ENCODE measurements at regions of chr2 and their contacts with region 1.

Region 1: DNA sequence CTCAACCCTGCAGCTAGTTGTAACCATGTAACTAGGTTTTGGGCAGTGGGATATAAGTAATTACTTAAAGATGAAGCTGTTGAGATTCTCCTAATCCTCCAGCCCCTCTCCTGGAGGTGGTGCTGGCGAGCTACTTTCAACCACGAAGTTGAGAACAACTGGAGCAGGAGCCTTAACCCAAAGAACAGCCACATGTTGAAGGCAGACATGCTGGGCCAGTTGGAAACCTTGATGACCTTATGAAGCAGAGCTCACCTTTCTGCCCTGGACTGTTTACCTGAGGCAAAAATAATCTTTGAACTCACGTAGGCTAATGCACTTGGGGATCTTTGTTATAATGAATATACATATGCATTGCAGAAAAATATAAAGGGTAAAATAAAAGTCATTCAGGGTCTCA is 89.6 kb upstream of the NPAS2 start:
- DNase-seq: peak; percentile 74
- H3K4me3 ChIP-seq: no peak overlapping the region
- H3K27ac ChIP-seq: no peak overlapping the region
- H3K4me1 ChIP-seq: peaks cover 26% of the 10 kb centered on the region
- H3K27me3 ChIP-seq: no peaks in the 10 kb centered on the region
- CTCF ChIP-seq: peak; percentile 76 to 90

Region 2: DNA sequence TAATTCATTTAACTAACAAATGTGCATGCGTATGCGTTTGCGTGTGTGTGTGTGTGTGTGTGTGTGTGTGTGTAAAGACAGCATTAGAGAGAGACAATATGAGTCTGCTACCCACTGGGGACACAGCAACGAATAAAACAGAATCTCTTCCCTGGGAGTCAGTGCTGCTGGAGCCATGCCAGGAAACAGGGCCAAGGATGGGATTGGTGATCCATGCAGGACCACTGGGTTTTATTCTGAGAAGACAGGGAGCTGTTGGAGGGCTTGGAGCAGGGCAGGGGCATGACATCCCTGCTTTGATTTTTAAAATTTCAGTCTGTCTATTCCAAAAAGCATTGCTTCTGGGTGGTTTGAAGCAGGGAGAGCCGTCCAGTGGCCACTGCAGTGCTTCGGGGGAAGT is 104.6 kb before region 1 on chr2:
- CTCF ChIA-PET with region 1: no interaction called
- dilution Hi-C with region 1: no loop called
- in situ Hi-C with region 1: no loop called
- intact Hi-C with region 1: no loop called
- DNase-seq: no peak
- H3K4me3 ChIP-seq: no peak overlapping the region
- H3K27ac ChIP-seq: no peak overlapping the region
- H3K4me1 ChIP-seq: no peaks in the 10 kb centered on the region
- H3K27me3 ChIP-seq: peaks cover 11% of the 10 kb centered on the region
- CTCF ChIP-seq: no peak

Region 3: DNA sequence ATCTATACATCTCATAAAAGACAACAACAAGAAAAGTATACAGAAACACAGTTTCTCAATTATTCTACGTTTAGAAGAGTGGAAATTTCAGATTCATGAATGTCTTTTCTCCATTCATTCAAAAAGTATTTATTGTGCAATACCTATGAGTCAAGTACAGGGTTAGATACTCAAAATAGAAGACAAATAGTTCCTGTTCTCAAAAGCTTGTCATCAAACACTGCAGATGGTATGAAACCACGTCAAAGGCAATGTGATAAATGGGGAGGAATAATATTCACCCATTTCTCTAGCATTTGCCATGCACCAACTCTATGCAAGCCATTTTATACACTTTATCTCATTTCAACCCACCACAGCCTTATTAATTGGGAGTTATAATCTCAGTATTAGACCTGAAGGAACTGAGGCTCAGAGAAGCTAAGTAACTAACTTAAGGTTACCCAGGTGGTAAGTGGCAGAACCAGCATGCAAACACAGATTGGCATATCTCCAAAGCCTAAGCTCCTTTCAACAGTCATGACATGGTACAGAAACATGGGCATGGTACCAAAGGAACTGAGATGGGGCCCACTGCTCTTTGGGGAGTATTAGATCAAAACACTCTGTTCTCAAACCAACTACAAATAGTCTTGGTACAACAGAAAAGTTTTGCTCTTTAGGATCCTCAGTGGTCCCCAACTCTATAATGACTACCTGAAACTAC is 22.4 kb after region 1 on chr2:
- CTCF ChIA-PET with region 1: no interaction called
- dilution Hi-C with region 1: no loop called
- in situ Hi-C with region 1: no loop called
- intact Hi-C with region 1: loop called (anchors 1 kb)
- DNase-seq: peak; percentile 92
- H3K4me3 ChIP-seq: peak overlapping the region in 1 of 3 experiments; percentile 5
- H3K27ac ChIP-seq: peak overlapping the region; percentile 100
- H3K4me1 ChIP-seq: peaks cover 72% of the 10 kb centered on the region
- H3K27me3 ChIP-seq: no peaks in the 10 kb centered on the region
- CTCF ChIP-seq: no peak

Region 4: GRCh38 chr2:100870652-100871531 is 140.5 kb after region 1 on chr2:
- CTCF ChIA-PET with region 1: no interaction called
- dilution Hi-C with region 1: no loop called
- in situ Hi-C with region 1: no loop called
- intact Hi-C with region 1: loop called (anchors 1 kb)
- DNase-seq: no peak
- H3K4me3 ChIP-seq: no peak overlapping the region
- H3K27ac ChIP-seq: no peak overlapping the region
- H3K4me1 ChIP-seq: peaks cover 4% of the 10 kb centered on the region
- H3K27me3 ChIP-seq: no peaks in the 10 kb centered on the region
- CTCF ChIP-seq: peak; percentile 25 to 26

Region 5: DNA sequence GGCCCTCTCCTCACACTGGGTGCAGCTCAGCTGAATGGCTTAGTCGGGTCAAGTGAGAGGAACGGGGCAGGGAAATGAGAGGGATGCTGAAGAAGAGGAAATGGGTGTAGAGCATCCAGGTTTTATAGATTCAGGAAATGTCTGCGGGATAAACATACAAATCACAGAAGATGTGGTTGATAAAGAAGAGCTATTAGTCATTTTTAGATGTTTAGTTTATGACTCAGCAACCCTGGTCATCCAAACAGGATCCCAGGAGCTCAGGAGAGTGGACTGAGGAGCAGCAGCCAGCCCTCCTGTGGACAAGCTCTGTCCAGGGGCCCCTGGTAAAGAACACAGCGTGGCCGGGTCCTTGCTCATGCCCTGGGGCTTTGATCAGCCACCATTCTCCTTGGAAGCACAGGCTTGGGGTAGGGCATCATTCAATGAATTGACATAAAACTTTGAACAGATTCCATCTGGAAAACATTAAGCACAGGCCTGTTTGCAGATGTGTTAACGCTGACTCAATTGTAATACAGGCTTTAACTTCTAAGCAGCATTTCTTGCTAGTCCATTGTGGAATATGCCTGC is 172.6 kb after region 1 on chr2:
- CTCF ChIA-PET with region 1: no interaction called
- dilution Hi-C with region 1: no loop called
- in situ Hi-C with region 1: loop called in 1 of 2 experiments (anchors 10 kb)
- intact Hi-C with region 1: loop called (anchors 1 kb)
- DNase-seq: peak; percentile 92
- H3K4me3 ChIP-seq: no peak overlapping the region
- H3K27ac ChIP-seq: peak overlapping the region; percentile 50
- H3K4me1 ChIP-seq: peaks cover 46% of the 10 kb centered on the region
- H3K27me3 ChIP-seq: no peaks in the 10 kb centered on the region
- CTCF ChIP-seq: peak in 1 of 2 donors; percentile 8

Region 6: GRCh38 chr2:101001691-101002561 is 271.6 kb after region 1 on chr2 and contains the start of gene RPL31:
- CTCF ChIA-PET with region 1: no interaction called
- dilution Hi-C with region 1: no loop called
- in situ Hi-C with region 1: loop called in 1 of 2 experiments (anchors 10 kb)
- intact Hi-C with region 1: loop called (anchors 1 kb)
- DNase-seq: peak; percentile 93
- H3K4me3 ChIP-seq: peak within 1 kb of the TSS; percentile 90 to 95 (median 91)
- H3K27ac ChIP-seq: peak within 1 kb of the TSS; percentile 87
- H3K4me1 ChIP-seq: peaks cover 22% of the 10 kb centered on the region
- H3K27me3 ChIP-seq: no peaks in the 10 kb centered on the region
- CTCF ChIP-seq: no peak
- total RNA-seq, gene RPL31: 731 to 1,237 TPM

Region 7: GRCh38 chr2:101205521-101205998 is 475.2 kb after region 1 on chr2:
- CTCF ChIA-PET with region 1: no interaction called
- dilution Hi-C with region 1: no loop called
- in situ Hi-C with region 1: no loop called
- intact Hi-C with region 1: loop called (anchors 5 kb)
- DNase-seq: peak; percentile 82
- H3K4me3 ChIP-seq: peak overlapping the region; percentile 10 to 55 (median 42)
- H3K27ac ChIP-seq: peak overlapping the region; percentile 48
- H3K4me1 ChIP-seq: peaks cover 8% of the 10 kb centered on the region
- H3K27me3 ChIP-seq: no peaks in the 10 kb centered on the region
- CTCF ChIP-seq: peak; percentile 60 to 70